Endothelial cell of umbilical vein (primary cell): ENCODE measurements at regions of chr15 and their contacts with region 1.

Region 1: DNA sequence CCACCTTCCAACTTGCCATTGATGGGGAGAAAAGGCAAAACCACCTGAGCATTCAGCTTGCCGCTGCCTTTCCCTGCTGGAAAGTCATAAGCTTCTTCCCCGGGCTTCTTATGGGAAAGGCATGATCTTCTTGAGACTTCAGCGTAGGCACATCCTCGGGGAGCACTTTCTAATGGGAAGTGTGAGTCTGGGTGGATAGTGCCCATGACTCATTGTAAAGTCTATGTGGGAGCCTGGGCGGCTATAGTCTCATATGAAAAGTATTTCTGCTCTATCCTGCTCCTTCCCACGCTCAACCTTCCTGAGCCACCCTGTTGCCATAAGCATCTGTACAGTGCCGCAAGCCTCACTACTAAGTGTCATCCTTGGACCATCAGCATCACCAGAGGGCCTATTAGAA is 309.9 kb upstream of the THBS1 start:
- DNase-seq: peak; percentile 90
- H3K4me3 ChIP-seq: no peak overlapping the region
- H3K27ac ChIP-seq: peak overlapping the region; percentile 89
- H3K4me1 ChIP-seq: peaks cover 53% of the 10 kb centered on the region
- H3K27me3 ChIP-seq: no peaks in the 10 kb centered on the region
- CTCF ChIP-seq: no peak
- POLR2A ChIP-seq: no peak

Region 2: DNA sequence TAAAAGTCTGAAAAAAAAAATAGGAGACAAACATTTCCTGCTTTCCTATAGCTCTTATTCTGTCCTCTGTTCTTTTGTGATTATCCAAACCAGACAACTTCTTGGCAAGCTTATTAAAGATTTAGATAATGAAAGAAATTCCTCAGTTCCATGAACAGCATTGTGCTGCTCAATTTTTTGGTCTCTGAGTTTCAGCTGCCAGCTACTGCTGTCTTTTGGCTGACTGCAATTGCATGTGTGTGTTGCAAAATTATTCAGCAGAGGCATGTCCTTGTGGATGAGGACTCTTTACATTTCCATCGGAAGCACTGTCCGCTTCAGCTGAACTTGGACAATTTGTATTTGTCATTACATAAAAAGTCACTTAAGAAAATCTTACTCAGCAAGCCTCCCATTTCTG is 309.0 kb before region 1 on chr15:
- CTCF ChIA-PET with region 1: no interaction called
- POLR2A ChIA-PET with region 1: no interaction called
- dilution Hi-C with region 1: no loop called
- intact Hi-C with region 1: no loop called
- DNase-seq: peak; percentile 55
- H3K4me3 ChIP-seq: no peak overlapping the region
- H3K27ac ChIP-seq: no peak overlapping the region
- H3K4me1 ChIP-seq: peaks cover 7% of the 10 kb centered on the region
- H3K27me3 ChIP-seq: no peaks in the 10 kb centered on the region
- CTCF ChIP-seq: no peak
- POLR2A ChIP-seq: no peak

Region 3: DNA sequence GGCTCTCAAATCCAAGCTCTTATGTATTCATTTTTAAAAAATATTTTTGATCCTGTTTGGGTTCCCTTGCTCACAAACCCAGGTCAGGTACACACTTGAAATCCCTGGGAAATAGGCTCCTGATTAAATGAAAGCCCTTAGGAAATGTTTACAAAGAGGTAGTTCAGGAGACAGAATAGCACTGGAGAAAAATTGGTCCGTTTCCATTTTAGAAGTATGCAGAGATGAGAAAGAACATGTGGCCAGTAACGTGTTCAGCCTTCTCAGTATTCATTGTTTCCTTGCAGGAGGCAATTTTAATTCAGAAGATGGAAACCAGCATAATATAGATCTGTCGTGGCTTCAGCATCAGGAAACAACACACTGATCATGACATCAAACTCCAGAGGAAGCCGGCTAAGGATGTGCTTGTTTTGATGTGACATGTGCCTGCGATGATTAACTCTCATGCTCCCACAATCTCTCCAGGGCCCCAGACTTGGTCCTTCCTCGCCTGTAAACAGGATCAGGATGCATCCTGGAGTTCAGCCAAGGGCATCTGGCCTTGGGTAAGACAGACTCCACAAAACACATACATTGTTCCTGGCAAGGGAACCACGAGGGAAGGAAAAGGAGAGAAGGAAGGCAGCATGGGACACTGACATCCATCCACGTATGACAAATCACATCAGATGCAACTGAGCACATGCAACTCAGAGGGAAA is 40.6 kb before region 1 on chr15:
- CTCF ChIA-PET with region 1: no interaction called
- POLR2A ChIA-PET with region 1: no interaction called
- dilution Hi-C with region 1: no loop called
- intact Hi-C with region 1: loop called (anchors 1 kb)
- DNase-seq: peak; percentile 100
- H3K4me3 ChIP-seq: no peak overlapping the region
- H3K27ac ChIP-seq: peak overlapping the region; percentile 93
- H3K4me1 ChIP-seq: peaks cover 49% of the 10 kb centered on the region
- H3K27me3 ChIP-seq: no peaks in the 10 kb centered on the region
- CTCF ChIP-seq: no peak
- POLR2A ChIP-seq: no peak

Region 4: GRCh38 chr15:39248204-39248603 is 22.7 kb before region 1 on chr15:
- CTCF ChIA-PET with region 1: interaction called, 7 read pairs
- POLR2A ChIA-PET with region 1: no interaction called
- dilution Hi-C with region 1: no loop called
- intact Hi-C with region 1: loop called (anchors 2 kb)
- DNase-seq: peak; percentile 99
- H3K4me3 ChIP-seq: peak overlapping the region in 1 of 3 experiments; percentile 0
- H3K27ac ChIP-seq: peak overlapping the region; percentile 98
- H3K4me1 ChIP-seq: peaks cover 72% of the 10 kb centered on the region
- H3K27me3 ChIP-seq: no peaks in the 10 kb centered on the region
- CTCF ChIP-seq: no peak
- POLR2A ChIP-seq: no peak

Region 5: DNA sequence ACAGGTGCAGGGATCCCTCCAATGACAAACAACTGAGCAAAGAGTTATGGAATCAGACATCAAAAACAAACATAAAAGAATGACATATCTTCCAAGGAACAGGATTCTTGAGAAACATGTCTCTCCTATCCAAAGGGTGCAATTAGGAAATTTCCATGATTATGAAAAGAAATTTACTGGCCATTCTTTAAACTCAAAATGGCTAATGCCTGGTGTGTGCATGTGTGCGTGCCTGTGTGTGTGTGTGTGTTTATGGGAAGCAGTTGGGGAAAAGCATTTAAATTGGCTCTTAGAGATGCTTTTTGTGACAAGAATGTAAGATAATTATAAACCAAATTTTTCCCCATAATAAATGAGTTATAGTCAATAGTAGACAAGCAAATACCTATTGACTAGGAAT is 10.5 kb before region 1 on chr15:
- CTCF ChIA-PET with region 1: interaction called, 10 read pairs
- POLR2A ChIA-PET with region 1: no interaction called
- dilution Hi-C with region 1: no loop called
- intact Hi-C with region 1: no loop called
- DNase-seq: no peak
- H3K4me3 ChIP-seq: no peak overlapping the region
- H3K27ac ChIP-seq: peak overlapping the region; percentile 95
- H3K4me1 ChIP-seq: peaks cover 32% of the 10 kb centered on the region
- H3K27me3 ChIP-seq: no peaks in the 10 kb centered on the region
- CTCF ChIP-seq: no peak
- POLR2A ChIP-seq: no peak

Region 6: GRCh38 chr15:39287322-39288195 is 16.6 kb after region 1 on chr15:
- CTCF ChIA-PET with region 1: interaction called, 3 read pairs
- POLR2A ChIA-PET with region 1: no interaction called
- dilution Hi-C with region 1: no loop called
- intact Hi-C with region 1: loop called (anchors 1 kb)
- DNase-seq: peak; percentile 72
- H3K4me3 ChIP-seq: no peak overlapping the region
- H3K27ac ChIP-seq: peak overlapping the region; percentile 52
- H3K4me1 ChIP-seq: peaks cover 26% of the 10 kb centered on the region
- H3K27me3 ChIP-seq: no peaks in the 10 kb centered on the region
- CTCF ChIP-seq: no peak
- POLR2A ChIP-seq: no peak

Region 7: GRCh38 chr15:39301589-39301999 is 30.7 kb after region 1 on chr15:
- CTCF ChIA-PET with region 1: interaction called, 4 read pairs
- POLR2A ChIA-PET with region 1: interaction called, 3 read pairs
- dilution Hi-C with region 1: no loop called
- intact Hi-C with region 1: loop called (anchors 1 kb)
- DNase-seq: peak; percentile 37
- H3K4me3 ChIP-seq: no peak overlapping the region
- H3K27ac ChIP-seq: peak overlapping the region; percentile 92
- H3K4me1 ChIP-seq: peaks cover 31% of the 10 kb centered on the region
- H3K27me3 ChIP-seq: no peaks in the 10 kb centered on the region
- CTCF ChIP-seq: no peak
- POLR2A ChIP-seq: no peak

Region 8: DNA sequence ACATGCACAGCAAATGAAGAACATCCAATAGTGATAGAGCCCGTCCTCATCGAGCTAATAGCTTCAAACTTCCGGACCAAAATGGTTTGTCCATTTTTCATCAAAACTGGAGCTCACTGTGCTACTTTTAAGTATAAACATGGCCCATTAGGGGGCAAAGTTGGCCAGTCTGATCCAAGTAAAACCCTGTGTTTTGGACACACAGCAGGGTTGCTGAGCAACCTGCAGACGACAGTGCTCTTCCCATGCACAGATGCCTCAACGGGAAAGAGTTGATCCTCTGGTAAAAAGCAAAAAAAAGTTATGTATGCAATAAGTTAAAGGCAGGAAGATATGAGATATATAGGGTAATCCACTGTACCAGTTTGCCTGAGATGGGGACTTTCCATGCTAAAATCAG is 66.0 kb after region 1 on chr15:
- CTCF ChIA-PET with region 1: no interaction called
- POLR2A ChIA-PET with region 1: no interaction called
- dilution Hi-C with region 1: no loop called
- intact Hi-C with region 1: no loop called
- DNase-seq: no peak
- H3K4me3 ChIP-seq: no peak overlapping the region
- H3K27ac ChIP-seq: no peak overlapping the region
- H3K4me1 ChIP-seq: no peaks in the 10 kb centered on the region
- H3K27me3 ChIP-seq: no peaks in the 10 kb centered on the region
- CTCF ChIP-seq: no peak
- POLR2A ChIP-seq: no peak